Calu3 (cell line): ENCODE measurements at regions of chr4 and their contacts with region 1.

Region 1: GRCh38 chr4:40629401-40630334 is at the start of gene RBM47:
- DNase-seq: peak; percentile 78
- H3K4me3 Mint-ChIP-seq: peak within 1 kb of the TSS; percentile 94
- H3K27ac Mint-ChIP-seq: peak within 1 kb of the TSS; percentile 98
- H3K4me1 Mint-ChIP-seq: peaks cover 21% of the 10 kb centered on the region
- H3K27me3 Mint-ChIP-seq: no peaks in the 10 kb centered on the region
- CTCF ChIP-seq: no peak
- total RNA-seq, gene RBM47: 86.6 and 106 TPM in 2 replicates

Region 2: GRCh38 chr4:40275065-40275730 is 354.5 kb before region 1 on chr4:
- CTCF ChIA-PET with region 1: no interaction called
- intact Hi-C with region 1: no loop called
- DNase-seq: no peak
- H3K4me3 Mint-ChIP-seq: no peak overlapping the region
- H3K27ac Mint-ChIP-seq: no peak overlapping the region
- H3K4me1 Mint-ChIP-seq: no peaks in the 10 kb centered on the region
- H3K27me3 Mint-ChIP-seq: no peaks in the 10 kb centered on the region
- CTCF ChIP-seq: no peak

Region 3: GRCh38 chr4:40662962-40663604 is 33.4 kb after region 1 on chr4:
- CTCF ChIA-PET with region 1: no interaction called
- intact Hi-C with region 1: loop called (anchors 5 kb)
- DNase-seq: peak; percentile 26
- H3K4me3 Mint-ChIP-seq: peak overlapping the region; percentile 36
- H3K27ac Mint-ChIP-seq: peak overlapping the region; percentile 58
- H3K4me1 Mint-ChIP-seq: no peaks in the 10 kb centered on the region
- H3K27me3 Mint-ChIP-seq: no peaks in the 10 kb centered on the region
- CTCF ChIP-seq: no peak

Region 4: GRCh38 chr4:40699648-40700047 is 70.0 kb after region 1 on chr4:
- CTCF ChIA-PET with region 1: no interaction called
- intact Hi-C with region 1: loop called (anchors 5 kb)
- DNase-seq: no peak
- H3K4me3 Mint-ChIP-seq: no peak overlapping the region
- H3K27ac Mint-ChIP-seq: no peak overlapping the region
- H3K4me1 Mint-ChIP-seq: peaks cover 11% of the 10 kb centered on the region
- H3K27me3 Mint-ChIP-seq: no peaks in the 10 kb centered on the region
- CTCF ChIP-seq: no peak

Region 5: DNA sequence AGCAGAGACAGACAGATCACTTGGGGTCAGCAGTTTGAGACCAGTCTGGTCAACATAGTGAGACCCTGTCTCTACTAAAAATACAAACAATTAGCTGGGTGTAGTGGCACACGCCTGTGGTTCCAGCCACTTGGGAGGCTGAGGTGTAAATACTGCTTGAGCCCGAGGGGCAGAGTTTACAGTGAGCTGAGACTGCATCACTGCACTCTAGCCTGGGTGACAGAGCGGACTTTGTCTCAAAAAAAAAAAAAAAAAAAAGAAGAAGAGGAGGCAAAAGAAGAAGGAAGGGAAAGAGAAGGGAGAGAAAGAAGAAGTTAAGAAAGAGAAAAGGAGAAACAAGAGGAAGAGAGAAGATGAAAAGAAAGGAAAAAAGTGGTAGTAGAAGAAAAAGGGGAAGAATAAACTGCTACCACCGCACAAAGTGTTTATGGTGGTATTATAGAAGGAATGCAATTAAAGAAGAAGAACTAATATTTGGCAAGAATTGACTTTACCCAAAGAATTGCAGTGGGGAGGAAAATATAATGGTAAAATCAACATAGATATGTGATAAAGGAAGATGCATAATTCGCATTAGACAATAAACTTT is 100.5 kb after region 1 on chr4:
- CTCF ChIA-PET with region 1: no interaction called
- intact Hi-C with region 1: no loop called
- DNase-seq: no peak
- H3K4me3 Mint-ChIP-seq: no peak overlapping the region
- H3K27ac Mint-ChIP-seq: no peak overlapping the region
- H3K4me1 Mint-ChIP-seq: peaks cover 9% of the 10 kb centered on the region
- H3K27me3 Mint-ChIP-seq: no peaks in the 10 kb centered on the region
- CTCF ChIP-seq: no peak

Region 6: GRCh38 chr4:40749717-40750460 is 120.2 kb after region 1 on chr4 and contains the start of gene NSUN7:
- CTCF ChIA-PET with region 1: no interaction called
- intact Hi-C with region 1: no loop called
- DNase-seq: peak; percentile 87
- H3K4me3 Mint-ChIP-seq: peak within 1 kb of the TSS; percentile 79
- H3K27ac Mint-ChIP-seq: peak within 1 kb of the TSS; percentile 80
- H3K4me1 Mint-ChIP-seq: peaks cover 8% of the 10 kb centered on the region
- H3K27me3 Mint-ChIP-seq: no peaks in the 10 kb centered on the region
- CTCF ChIP-seq: no peak
- total RNA-seq, gene NSUN7: 7.7 and 8.6 TPM in 2 replicates